Gastrocnemius medialis (tissue), 4 donors: ENCODE measurements at regions of chr1 and their contacts with region 1.

Region 1: GRCh38 chr1:221845650-221846371 is 103.9 kb upstream of the DUSP10 start:
- DNase-seq: peak; percentile 33 to 62
- ATAC-seq: peak; percentile 92 to 93
- H3K4me3 ChIP-seq: peak overlapping the region in 1 of 4 donors; percentile 9
- H3K27ac ChIP-seq: peak overlapping the region; percentile 33 to 70 (median 54)
- H3K4me1 ChIP-seq: peaks cover 0 to 16% of the 10 kb centered on the region in 2 donors
- H3K27me3 ChIP-seq: no peaks in the 10 kb centered on the region
- CTCF ChIP-seq: no peak
- POLR2A ChIP-seq: no peak

Region 2: DNA sequence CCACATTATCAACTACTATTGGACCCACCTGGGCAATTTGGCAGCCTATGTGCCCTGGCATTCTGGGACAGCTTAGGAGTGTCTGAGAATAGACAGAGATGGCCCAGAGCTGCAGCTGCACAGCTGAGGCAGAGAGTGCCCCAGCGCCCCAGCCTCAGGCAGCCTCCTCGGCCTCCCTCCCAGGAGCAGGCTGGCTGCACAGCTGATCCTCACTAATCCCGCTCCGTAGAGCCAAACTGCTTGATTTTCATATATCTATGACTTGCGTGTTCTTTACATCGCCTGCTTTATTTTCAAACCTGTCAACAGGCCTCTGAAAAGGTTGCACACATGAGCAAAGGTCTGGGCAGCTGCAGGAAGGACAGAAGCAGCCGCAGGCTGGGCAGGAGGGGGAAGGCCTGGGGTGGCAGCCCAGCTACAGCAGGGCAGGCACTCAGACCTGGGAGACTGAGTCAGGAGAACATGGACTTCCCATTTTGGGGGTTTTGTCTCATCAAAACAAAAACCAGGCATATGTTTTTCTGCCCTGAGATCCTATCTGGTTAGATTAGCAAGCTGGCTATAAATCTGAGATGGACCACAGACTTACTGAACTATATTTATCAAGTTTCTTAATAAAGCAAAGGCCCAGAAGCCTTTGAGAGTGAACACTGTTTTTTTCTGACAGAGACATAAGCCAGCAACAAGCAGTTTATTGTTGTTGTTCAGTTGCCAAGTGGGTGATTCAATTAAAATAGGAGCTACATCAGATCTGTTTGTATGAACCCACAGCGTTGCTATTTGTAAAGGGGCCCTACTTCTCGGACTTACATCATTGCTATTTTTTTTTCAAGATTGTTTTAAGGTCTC is 197.9 kb after region 1 on chr1:
- in situ Hi-C with region 1: no loop called
- intact Hi-C with region 1: loop called (anchors 5 kb)
- DNase-seq: peak in 1 of 2 donors; percentile 38
- ATAC-seq: peak; percentile 22 to 27
- H3K4me3 ChIP-seq: no peak overlapping the region
- H3K27ac ChIP-seq: peak overlapping the region; percentile 66 to 89 (median 76)
- H3K4me1 ChIP-seq: peaks cover 35 to 48% of the 10 kb centered on the region in 2 donors
- H3K27me3 ChIP-seq: no peaks in the 10 kb centered on the region
- CTCF ChIP-seq: no peak
- POLR2A ChIP-seq: no peak